SK-N-SH (cell line): ENCODE measurements at regions of chr2 and their contacts with region 1.

Region 1: GRCh38 chr2:169141713-169142352 is 72.5 kb downstream of the DHRS9 start:
- DNase-seq: peak; percentile 55
- H3K4me3 ChIP-seq: no peak overlapping the region
- H3K27ac ChIP-seq: no peak overlapping the region
- H3K4me1 ChIP-seq: no peaks in the 10 kb centered on the region
- H3K27me3 ChIP-seq: no peaks in the 10 kb centered on the region
- CTCF ChIP-seq: peak; percentile 79
- EP300 ChIP-seq: no peak
- RAD21 ChIP-seq: peak; percentile 58

Region 2: DNA sequence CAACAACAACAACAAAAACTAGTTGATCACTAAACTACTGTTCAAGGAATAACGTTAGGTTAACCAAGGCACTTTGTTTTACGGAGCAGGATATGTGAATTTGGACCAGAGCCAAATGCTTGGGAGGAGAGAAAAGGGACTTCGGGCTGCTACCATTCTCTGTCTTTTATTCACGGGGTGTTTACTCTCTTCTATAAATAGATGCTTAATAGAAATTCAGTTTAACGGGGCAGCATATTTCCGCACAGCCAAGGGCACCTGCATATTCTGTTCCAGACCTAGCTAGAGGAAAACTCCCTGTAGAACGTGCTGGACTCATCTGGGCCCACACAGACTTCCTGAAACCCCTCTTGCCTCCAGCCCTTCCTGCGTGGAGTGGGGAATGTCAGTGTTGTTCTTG is 858.6 kb before region 1 on chr2:
- CTCF ChIA-PET with region 1: no interaction called
- POLR2A ChIA-PET with region 1: no interaction called
- DNase-seq: no peak
- H3K4me3 ChIP-seq: no peak overlapping the region
- H3K27ac ChIP-seq: no peak overlapping the region
- H3K4me1 ChIP-seq: no peaks in the 10 kb centered on the region
- H3K27me3 ChIP-seq: no peaks in the 10 kb centered on the region
- CTCF ChIP-seq: no peak
- EP300 ChIP-seq: no peak
- RAD21 ChIP-seq: no peak

Region 3: DNA sequence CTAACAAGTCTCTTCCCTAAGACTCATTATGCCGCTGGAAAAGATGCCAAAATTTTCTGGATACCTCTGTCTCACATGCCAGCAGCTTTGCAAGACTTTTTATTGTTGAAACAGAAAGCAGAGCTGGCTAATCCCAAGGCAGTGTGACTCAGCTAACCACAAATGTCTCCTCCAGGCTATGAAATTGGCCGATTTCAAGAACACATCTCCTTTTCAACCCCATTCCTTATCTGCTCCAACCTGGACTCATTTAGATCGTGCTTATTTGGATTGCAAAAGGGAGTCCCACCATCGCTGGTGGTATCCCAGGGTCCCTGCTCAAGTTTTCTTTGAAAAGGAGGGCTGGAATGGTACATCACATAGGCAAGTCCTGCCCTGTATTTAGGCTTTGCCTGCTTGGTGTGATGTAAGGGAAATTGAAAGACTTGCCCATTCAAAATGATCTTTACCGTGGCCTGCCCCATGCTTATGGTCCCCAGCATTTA is 46.2 kb before region 1 on chr2:
- CTCF ChIA-PET with region 1: interaction called, 10 read pairs
- POLR2A ChIA-PET with region 1: no interaction called
- DNase-seq: no peak
- H3K4me3 ChIP-seq: no peak overlapping the region; a peak in 1 of 4 replicates
- H3K27ac ChIP-seq: no peak overlapping the region
- H3K4me1 ChIP-seq: no peaks in the 10 kb centered on the region
- H3K27me3 ChIP-seq: no peaks in the 10 kb centered on the region
- CTCF ChIP-seq: no peak
- EP300 ChIP-seq: peak in 1 of 2 experiments; percentile 19; a peak in 1 of 4 replicates
- RAD21 ChIP-seq: no peak

Region 4: GRCh38 chr2:169119126-169119770 is 22.6 kb before region 1 on chr2:
- CTCF ChIA-PET with region 1: interaction called, 14 read pairs
- POLR2A ChIA-PET with region 1: no interaction called
- DNase-seq: no peak
- H3K4me3 ChIP-seq: no peak overlapping the region
- H3K27ac ChIP-seq: no peak overlapping the region
- H3K4me1 ChIP-seq: no peaks in the 10 kb centered on the region
- H3K27me3 ChIP-seq: no peaks in the 10 kb centered on the region
- CTCF ChIP-seq: no peak
- EP300 ChIP-seq: no peak
- RAD21 ChIP-seq: no peak

Region 5: GRCh38 chr2:169159686-169160085 is 17.9 kb after region 1 on chr2:
- CTCF ChIA-PET with region 1: interaction called, 23 read pairs
- POLR2A ChIA-PET with region 1: no interaction called
- DNase-seq: no peak
- H3K4me3 ChIP-seq: no peak overlapping the region
- H3K27ac ChIP-seq: no peak overlapping the region
- H3K4me1 ChIP-seq: no peaks in the 10 kb centered on the region
- H3K27me3 ChIP-seq: no peaks in the 10 kb centered on the region
- CTCF ChIP-seq: no peak
- EP300 ChIP-seq: no peak
- RAD21 ChIP-seq: no peak